ENCODE measurements at regions of chr12 and their contacts with region 1.

Region 1: DNA sequence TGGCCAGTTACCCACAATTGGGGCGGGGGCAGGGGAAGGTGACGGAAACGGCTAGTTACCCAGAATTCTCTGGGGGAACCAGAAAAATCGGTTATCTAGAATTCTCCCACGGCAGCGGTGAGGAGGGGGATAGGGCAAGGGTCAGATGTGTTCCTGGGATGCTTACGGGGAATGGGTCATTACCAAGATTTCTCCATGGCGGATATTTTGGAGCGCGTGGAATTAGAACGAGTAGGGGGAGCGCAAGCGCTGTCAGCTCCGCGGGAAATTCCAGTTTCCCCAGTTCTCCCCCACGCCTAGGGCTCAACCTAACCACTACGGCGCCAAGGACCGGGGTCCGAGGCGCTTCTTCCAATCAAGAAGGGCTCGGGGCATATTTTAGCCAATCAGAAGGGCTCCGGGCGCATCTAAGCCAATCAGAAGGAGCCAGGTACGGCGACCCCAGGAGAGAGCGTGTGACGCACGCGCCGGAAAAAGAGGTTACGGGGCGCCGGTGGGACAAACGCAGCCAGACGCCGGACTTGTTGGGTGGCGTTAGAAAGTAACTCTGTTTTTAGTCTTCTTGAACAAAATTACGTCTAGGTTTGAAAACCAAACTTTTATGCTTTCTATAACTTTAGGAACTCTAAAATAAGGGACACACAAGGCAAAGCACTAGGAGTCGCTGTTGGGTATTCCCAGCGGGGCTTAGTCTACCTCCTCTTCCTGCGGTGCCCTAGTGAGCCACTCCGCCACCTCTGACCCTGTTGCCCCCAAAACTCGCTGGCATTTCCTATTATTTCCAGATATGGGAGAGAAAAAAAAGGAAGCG is at the start of gene PAN2:
- DNase-seq: peak; percentile 74 to 94 (median 92)
- ATAC-seq: peak; percentile 90
- H3K4me3 ChIP-seq: peak within 1 kb of the TSS; percentile 93
- H3K4me3 Mint-ChIP-seq: peak within 1 kb of the TSS; percentile 89 to 99 (median 95)
- H3K27ac ChIP-seq: peak within 1 kb of the TSS; percentile 98
- H3K27ac Mint-ChIP-seq: peak within 1 kb of the TSS; percentile 97 to 100 (median 99)
- H3K4me1 ChIP-seq: peaks cover 27 to 30% of the 10 kb centered on the region in 2 donors
- H3K4me1 Mint-ChIP-seq: peaks cover 16 to 66% (median 48%) of the 10 kb centered on the region in 7 donors
- H3K27me3 ChIP-seq: no peaks in the 10 kb centered on the region
- H3K27me3 Mint-ChIP-seq: peaks cover 0 to 2% (median 0%) of the 10 kb centered on the region in 5 donors
- total RNA-seq, gene PAN2: 65.8 to 279 (median 144) TPM

Region 2: DNA sequence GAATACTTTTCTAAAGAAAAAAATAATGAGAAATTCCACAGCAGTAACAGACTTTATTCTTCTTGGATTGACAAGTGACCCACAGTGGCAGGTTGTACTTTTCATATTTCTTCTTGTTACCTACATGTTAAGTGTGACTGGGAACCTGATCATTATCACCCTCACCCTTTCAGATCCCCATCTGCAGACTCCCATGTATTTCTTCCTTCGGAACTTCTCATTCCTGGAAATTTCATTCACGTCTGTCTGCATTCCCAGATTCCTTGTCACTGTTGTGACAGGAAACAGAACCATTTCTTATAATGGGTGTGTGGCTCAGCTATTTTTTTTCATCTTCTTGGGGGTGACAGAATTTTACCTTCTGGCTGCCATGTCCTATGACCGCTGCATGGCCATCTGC is 968.8 kb before region 1 on chr12:
- CTCF ChIA-PET with region 1: no interaction called
- POLR2A ChIA-PET with region 1: no interaction called
- intact Hi-C with region 1: no loop called
- DNase-seq: no peak
- ATAC-seq: no peak
- H3K4me3 ChIP-seq: no peak overlapping the region
- H3K4me3 Mint-ChIP-seq: no peak overlapping the region
- H3K27ac ChIP-seq: no peak overlapping the region
- H3K27ac Mint-ChIP-seq: no peak overlapping the region
- H3K4me1 ChIP-seq: no peaks in the 10 kb centered on the region
- H3K4me1 Mint-ChIP-seq: peaks cover 0 to 1% (median 0%) of the 10 kb centered on the region in 7 donors
- H3K27me3 ChIP-seq: no peaks in the 10 kb centered on the region
- H3K27me3 Mint-ChIP-seq: peaks cover 0 to 34% (median 27%) of the 10 kb centered on the region in 5 donors

Region 3: GRCh38 chr12:56266693-56267442 is 67.0 kb before region 1 on chr12 and contains the start of gene COQ10A:
- CTCF ChIA-PET with region 1: interaction called, 3 read pairs
- POLR2A ChIA-PET with region 1: interaction called, 4 read pairs
- intact Hi-C with region 1: loop called in 1 of 2 experiments (anchors 1 kb)
- DNase-seq: peak; percentile 78 to 92 (median 89)
- ATAC-seq: peak; percentile 93
- H3K4me3 ChIP-seq: peak within 1 kb of the TSS; percentile 88
- H3K4me3 Mint-ChIP-seq: peak within 1 kb of the TSS; percentile 83 to 100 (median 96)
- H3K27ac ChIP-seq: peak within 1 kb of the TSS; percentile 94
- H3K27ac Mint-ChIP-seq: peak within 1 kb of the TSS; percentile 89 to 97 (median 94)
- H3K4me1 ChIP-seq: peaks cover 0 to 8% of the 10 kb centered on the region in 2 donors
- H3K4me1 Mint-ChIP-seq: peaks cover 0 to 22% (median 20%) of the 10 kb centered on the region in 7 donors
- H3K27me3 ChIP-seq: no peaks in the 10 kb centered on the region
- H3K27me3 Mint-ChIP-seq: peaks cover 0 to 2% (median 0%) of the 10 kb centered on the region in 5 donors
- total RNA-seq, gene COQ10A: 22.5 to 39.4 (median 31.5) TPM

Region 4: GRCh38 chr12:56315622-56316473 is 18.0 kb before region 1 on chr12 and contains the start of gene CNPY2:
- CTCF ChIA-PET with region 1: interaction called, 5 read pairs
- POLR2A ChIA-PET with region 1: interaction called, 66 read pairs
- intact Hi-C with region 1: loop called (anchors 1 kb)
- DNase-seq: peak; percentile 83 to 94 (median 92)
- ATAC-seq: peak; percentile 93
- H3K4me3 ChIP-seq: peak within 1 kb of the TSS; percentile 100
- H3K4me3 Mint-ChIP-seq: peak within 1 kb of the TSS; percentile 96 to 99 (median 98)
- H3K27ac ChIP-seq: peak within 1 kb of the TSS; percentile 97
- H3K27ac Mint-ChIP-seq: peak within 1 kb of the TSS; percentile 93 to 99 (median 99)
- H3K4me1 ChIP-seq: peaks cover 13 to 16% of the 10 kb centered on the region in 2 donors
- H3K4me1 Mint-ChIP-seq: peaks cover 5 to 23% (median 13%) of the 10 kb centered on the region in 7 donors
- H3K27me3 ChIP-seq: no peaks in the 10 kb centered on the region
- H3K27me3 Mint-ChIP-seq: no peaks in the 10 kb centered on the region
- total RNA-seq, gene CNPY2: 48.4 to 134 (median 87.6) TPM

Region 5: DNA sequence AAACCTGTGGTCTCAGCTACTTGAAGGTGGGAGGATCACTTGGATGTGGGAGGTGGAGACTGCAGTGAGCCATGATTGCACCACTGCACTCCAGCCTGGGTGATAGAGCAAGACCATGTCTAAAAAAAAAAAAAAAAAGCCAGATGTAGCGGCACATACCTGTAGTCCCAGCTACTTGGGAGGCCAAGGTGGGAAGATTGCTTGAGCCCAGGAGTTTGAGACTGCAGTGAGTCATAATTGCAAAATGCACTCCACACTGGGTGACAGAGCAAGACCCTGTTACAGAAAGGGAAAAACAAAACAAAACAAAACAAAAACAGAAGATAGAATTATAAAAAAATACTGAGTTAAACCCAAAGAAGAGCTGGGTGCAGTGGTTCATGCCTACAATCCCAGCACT is 57.8 kb after region 1 on chr12:
- CTCF ChIA-PET with region 1: no interaction called
- POLR2A ChIA-PET with region 1: no interaction called
- intact Hi-C with region 1: no loop called
- DNase-seq: no peak
- ATAC-seq: no peak
- H3K4me3 ChIP-seq: no peak overlapping the region
- H3K4me3 Mint-ChIP-seq: no peak overlapping the region
- H3K27ac ChIP-seq: no peak overlapping the region
- H3K27ac Mint-ChIP-seq: no peak overlapping the region
- H3K4me1 ChIP-seq: no peaks in the 10 kb centered on the region
- H3K4me1 Mint-ChIP-seq: peaks cover 0 to 3% (median 0%) of the 10 kb centered on the region in 7 donors
- H3K27me3 ChIP-seq: no peaks in the 10 kb centered on the region
- H3K27me3 Mint-ChIP-seq: peaks cover 0 to 5% (median 0%) of the 10 kb centered on the region in 5 donors

Region 6: GRCh38 chr12:56425193-56425592 is 91.3 kb after region 1 on chr12:
- CTCF ChIA-PET with region 1: no interaction called
- POLR2A ChIA-PET with region 1: interaction called, 13 read pairs
- intact Hi-C with region 1: no loop called
- DNase-seq: peak in 6 of 9 donors; percentile 7 to 45 (median 35)
- ATAC-seq: peak; percentile 42
- H3K4me3 ChIP-seq: no peak overlapping the region
- H3K4me3 Mint-ChIP-seq: peak overlapping the region in 8 of 10 donors; percentile 39 to 73 (median 57)
- H3K27ac ChIP-seq: peak overlapping the region; percentile 38
- H3K27ac Mint-ChIP-seq: peak overlapping the region; percentile 33 to 91 (median 85)
- H3K4me1 ChIP-seq: peaks cover 0 to 12% of the 10 kb centered on the region in 2 donors
- H3K4me1 Mint-ChIP-seq: peaks cover 10 to 26% (median 15%) of the 10 kb centered on the region in 7 donors
- H3K27me3 ChIP-seq: no peaks in the 10 kb centered on the region
- H3K27me3 Mint-ChIP-seq: no peaks in the 10 kb centered on the region

Region 7: DNA sequence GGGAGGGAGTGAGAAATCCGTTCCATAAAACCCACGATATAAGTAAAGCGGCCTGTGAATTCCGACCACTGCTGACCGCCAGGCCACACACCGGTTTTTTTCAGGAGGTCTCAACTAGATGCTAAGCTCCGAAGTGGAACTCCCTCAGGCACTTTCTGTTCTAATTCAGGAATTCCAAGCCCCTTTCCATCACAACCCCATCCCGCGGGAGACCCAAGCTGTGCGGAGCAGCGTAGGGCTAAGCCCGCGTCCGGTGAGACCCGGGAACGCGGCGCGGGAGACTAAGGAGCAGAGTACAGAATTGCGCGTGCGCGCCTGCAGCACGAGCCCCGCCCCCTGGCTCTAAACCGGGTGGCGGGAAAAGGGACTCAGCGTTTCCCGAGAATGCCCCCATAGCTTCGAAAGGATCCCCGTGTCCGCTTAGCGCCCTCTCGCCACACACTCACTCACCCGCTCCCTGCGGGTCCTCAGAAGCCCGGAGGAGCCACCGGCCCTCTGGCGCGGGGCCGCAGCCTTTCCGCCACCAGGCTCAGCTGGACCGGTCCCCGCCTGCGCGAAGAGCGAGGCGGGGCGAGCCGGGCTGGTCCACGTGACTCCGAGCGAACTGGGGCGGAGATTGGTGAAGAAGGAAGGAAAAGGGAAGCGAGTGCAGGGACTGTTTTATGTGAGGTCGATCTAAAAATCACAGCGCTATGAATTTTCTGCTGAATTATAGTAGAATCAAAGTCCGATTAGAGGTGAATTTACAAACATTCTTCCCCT is 115.2 kb after region 1 on chr12 and contains the start of gene TIMELESS:
- CTCF ChIA-PET with region 1: interaction called, 4 read pairs
- POLR2A ChIA-PET with region 1: interaction called, 20 read pairs
- intact Hi-C with region 1: loop called (anchors 1 to 5 kb)
- DNase-seq: peak; percentile 74 to 89 (median 85)
- ATAC-seq: peak; percentile 98
- H3K4me3 ChIP-seq: peak within 1 kb of the TSS; percentile 97
- H3K4me3 Mint-ChIP-seq: peak within 1 kb of the TSS; percentile 77 to 94 (median 92)
- H3K27ac ChIP-seq: peak within 1 kb of the TSS; percentile 74
- H3K27ac Mint-ChIP-seq: peak within 1 kb of the TSS; percentile 86 to 98 (median 93)
- H3K4me1 ChIP-seq: peaks cover 0 to 7% of the 10 kb centered on the region in 2 donors
- H3K4me1 Mint-ChIP-seq: peaks cover 12 to 36% (median 24%) of the 10 kb centered on the region in 7 donors
- H3K27me3 ChIP-seq: no peaks in the 10 kb centered on the region
- H3K27me3 Mint-ChIP-seq: no peaks in the 10 kb centered on the region
- total RNA-seq, gene TIMELESS: 4.4 to 42.3 (median 5.4) TPM